ENCODE measurements at regions of chr10 and their contacts with region 1.

Region 1: DNA sequence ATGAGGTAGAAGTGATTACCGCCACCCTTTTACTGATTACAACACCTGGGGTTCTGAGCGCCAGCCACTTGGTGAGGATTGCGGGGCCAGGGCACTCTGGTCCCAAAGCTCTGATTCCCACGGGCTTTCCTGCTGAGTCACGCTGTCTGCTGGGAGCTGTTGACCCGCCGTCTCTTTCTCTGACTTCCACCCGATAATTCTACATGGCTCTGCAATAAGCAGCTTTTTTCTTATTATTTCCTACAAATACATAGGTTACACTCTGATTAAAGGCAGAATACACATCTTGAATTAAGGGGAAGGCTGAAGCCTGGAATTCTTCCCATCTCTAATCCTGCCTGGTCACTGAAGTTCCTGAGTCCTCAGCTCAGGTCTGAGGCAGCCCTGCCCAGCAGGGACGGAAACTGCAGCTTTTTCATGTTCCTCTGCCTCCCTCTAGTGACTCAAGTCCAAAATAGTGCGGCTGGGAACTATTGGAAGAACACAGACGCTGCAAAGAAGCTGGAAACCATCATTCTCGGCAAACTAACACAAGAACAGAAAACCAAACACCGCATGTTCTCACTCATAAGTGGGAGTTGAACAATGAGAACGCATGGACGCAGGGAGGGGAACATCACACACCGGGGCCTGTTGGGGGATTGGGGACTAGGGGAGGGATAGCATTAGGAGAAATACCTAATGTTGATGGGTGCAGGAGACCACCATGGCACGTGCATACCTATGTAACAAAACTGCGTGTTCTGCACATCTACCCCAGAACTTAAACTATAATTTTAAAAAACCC is 178.3 kb downstream of the PRKCQ start:
- DNase-seq: peak; percentile 75
- H3K4me3 Mint-ChIP-seq: peak overlapping the region; percentile 2
- H3K27ac Mint-ChIP-seq: peak overlapping the region; percentile 3
- H3K4me1 Mint-ChIP-seq: peaks cover 47% of the 10 kb centered on the region
- H3K27me3 Mint-ChIP-seq: peaks cover 8% of the 10 kb centered on the region

Region 2: DNA sequence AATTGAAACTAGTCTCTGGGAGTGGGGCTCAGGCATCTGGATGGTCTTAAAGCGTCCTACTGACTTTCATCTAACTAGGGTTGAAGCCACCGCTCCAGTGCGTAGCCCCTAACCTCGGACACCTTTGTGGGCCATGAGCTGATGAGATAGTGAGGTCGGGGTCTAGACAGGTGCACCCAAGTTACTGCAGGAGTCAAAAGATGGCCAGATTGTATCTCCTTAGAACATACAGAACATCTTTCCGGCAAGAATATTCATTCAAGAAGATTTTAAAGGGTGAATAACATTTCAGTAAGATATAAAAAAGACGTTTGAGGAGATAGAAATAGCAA is 292.3 kb before region 1 on chr10:
- CTCF ChIA-PET with region 1: interaction called, 18 read pairs
- POLR2A ChIA-PET with region 1: no interaction called
- DNase-seq: no peak
- H3K4me3 Mint-ChIP-seq: no peak overlapping the region
- H3K27ac Mint-ChIP-seq: peak overlapping the region; percentile 26
- H3K4me1 Mint-ChIP-seq: peaks cover 44% of the 10 kb centered on the region
- H3K27me3 Mint-ChIP-seq: no peaks in the 10 kb centered on the region

Region 3: GRCh38 chr10:6218692-6219493 is 182.9 kb before region 1 on chr10:
- CTCF ChIA-PET with region 1: interaction called, 11 read pairs
- POLR2A ChIA-PET with region 1: no interaction called
- DNase-seq: no peak
- H3K4me3 Mint-ChIP-seq: no peak overlapping the region
- H3K27ac Mint-ChIP-seq: peak overlapping the region; percentile 36
- H3K4me1 Mint-ChIP-seq: peaks cover 2% of the 10 kb centered on the region
- H3K27me3 Mint-ChIP-seq: no peaks in the 10 kb centered on the region

Region 4: GRCh38 chr10:6382081-6382480 is 19.7 kb before region 1 on chr10:
- CTCF ChIA-PET with region 1: interaction called, 11 read pairs
- POLR2A ChIA-PET with region 1: no interaction called
- DNase-seq: peak; percentile 54
- H3K4me3 Mint-ChIP-seq: peak overlapping the region; percentile 49
- H3K27ac Mint-ChIP-seq: peak overlapping the region; percentile 84
- H3K4me1 Mint-ChIP-seq: peaks cover 35% of the 10 kb centered on the region
- H3K27me3 Mint-ChIP-seq: no peaks in the 10 kb centered on the region

Region 5: DNA sequence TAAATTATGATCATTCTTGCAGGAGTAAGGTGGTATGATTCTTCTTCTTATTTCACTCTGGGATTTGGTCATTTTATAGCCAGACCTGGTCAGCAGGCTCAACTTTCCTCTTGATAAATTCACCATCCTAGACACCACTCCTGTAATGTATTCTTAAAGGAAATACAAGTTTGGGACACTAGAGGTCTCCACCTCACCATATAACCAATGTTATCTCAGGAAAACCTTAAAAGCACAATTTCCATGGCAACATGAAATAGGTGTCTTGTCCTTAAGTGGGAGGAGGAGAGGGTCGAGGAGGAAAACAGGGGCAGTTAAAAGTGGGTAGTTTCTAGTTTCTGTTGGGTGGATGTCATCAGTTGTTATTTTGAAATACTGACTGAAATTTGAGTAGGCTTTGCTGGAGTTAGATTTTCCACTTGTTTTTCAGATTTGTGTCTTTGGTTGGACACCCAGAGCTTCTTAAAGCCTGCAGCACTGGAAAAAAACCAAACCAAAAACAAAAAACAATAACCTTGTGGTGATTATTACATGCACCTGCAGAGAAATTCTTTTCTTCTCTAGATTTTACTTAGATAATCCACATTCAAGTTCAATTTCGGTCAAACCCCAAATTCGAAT is 15.2 kb after region 1 on chr10:
- CTCF ChIA-PET with region 1: interaction called, 10 read pairs
- POLR2A ChIA-PET with region 1: no interaction called
- DNase-seq: peak; percentile 44
- H3K4me3 Mint-ChIP-seq: no peak overlapping the region
- H3K27ac Mint-ChIP-seq: no peak overlapping the region
- H3K4me1 Mint-ChIP-seq: peaks cover 3% of the 10 kb centered on the region
- H3K27me3 Mint-ChIP-seq: no peaks in the 10 kb centered on the region

Region 6: DNA sequence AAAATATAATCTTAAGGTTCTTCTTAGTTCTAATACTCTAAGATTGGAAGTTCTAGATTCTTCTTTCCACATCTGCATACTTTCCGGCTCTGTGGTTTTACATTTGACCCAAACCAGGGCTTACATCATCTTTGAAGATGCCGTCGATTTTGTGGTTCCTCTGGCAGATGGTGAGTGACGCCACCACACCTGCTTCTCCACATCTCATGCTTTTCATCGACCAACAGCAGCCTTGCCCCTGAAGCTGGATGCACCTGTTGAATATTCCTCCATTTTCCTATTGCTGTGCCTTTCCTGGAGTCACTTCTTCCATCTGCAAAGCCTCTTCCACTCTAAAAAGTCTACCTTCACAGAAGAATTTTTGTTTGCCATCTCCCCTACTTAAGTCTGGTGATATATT is 57.1 kb after region 1 on chr10:
- CTCF ChIA-PET with region 1: no interaction called
- POLR2A ChIA-PET with region 1: no interaction called
- DNase-seq: peak; percentile 24
- H3K4me3 Mint-ChIP-seq: no peak overlapping the region
- H3K27ac Mint-ChIP-seq: no peak overlapping the region
- H3K4me1 Mint-ChIP-seq: peaks cover 17% of the 10 kb centered on the region
- H3K27me3 Mint-ChIP-seq: no peaks in the 10 kb centered on the region